Heart left ventricle (tissue), 16 donors: ENCODE measurements at regions of chr11 and their contacts with region 1.

Region 1: DNA sequence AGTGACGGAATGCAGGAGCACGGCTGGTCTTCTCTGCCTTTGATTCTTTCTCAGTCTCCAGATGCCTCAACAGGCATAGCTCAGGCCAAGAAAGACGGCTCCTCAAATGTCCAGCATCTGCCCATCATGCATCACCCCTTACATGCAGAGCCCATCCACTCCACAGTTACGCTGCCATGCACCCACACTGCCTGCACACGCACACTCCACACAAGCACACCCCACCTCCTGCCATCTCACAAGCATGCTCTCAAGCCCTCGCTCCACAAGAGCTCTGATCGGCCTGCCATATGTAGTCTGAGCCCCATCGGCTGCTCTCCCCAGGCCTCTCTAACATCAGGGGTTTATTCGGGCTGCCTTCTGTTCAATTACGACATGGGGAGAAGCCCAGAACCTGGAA is 18.8 kb downstream of the SCN4B start:
- DNase-seq: no peak
- ATAC-seq: no peak
- H3K4me3 ChIP-seq: no peak overlapping the region
- H3K27ac ChIP-seq: no peak overlapping the region
- H3K4me1 ChIP-seq: peaks cover 0 to 21% (median 0%) of the 10 kb centered on the region in 12 donors
- H3K27me3 ChIP-seq: no peaks in the 10 kb centered on the region
- CTCF ChIP-seq: no peak
- POLR2A ChIP-seq: no peak

Region 2: DNA sequence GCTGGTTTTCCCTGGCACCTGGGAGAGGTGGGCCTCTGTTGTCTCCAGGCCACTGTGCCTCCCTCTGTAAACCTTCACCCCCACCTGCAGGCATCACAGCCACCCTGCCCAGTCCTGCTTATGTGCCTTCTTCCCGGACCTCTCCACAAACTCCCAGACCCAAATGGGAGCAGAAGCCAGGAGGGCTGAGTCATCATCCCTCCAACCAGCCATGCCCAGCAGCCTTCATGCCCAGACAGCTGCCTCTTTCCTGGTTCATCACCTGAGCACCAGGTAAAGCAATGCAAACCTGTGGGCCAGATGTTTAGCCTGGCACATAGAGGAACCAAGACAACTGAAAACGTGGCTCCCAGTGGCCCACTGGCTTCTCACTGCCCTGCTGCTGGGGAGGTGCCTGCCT is 59.0 kb before region 1 on chr11:
- intact Hi-C with region 1: loop called in 1 of 10 experiments (anchors 2 kb)
- DNase-seq: no peak
- ATAC-seq: no peak
- H3K4me3 ChIP-seq: no peak overlapping the region
- H3K27ac ChIP-seq: no peak overlapping the region
- H3K4me1 ChIP-seq: no peaks in the 10 kb centered on the region
- H3K27me3 ChIP-seq: no peaks in the 10 kb centered on the region
- CTCF ChIP-seq: no peak
- POLR2A ChIP-seq: no peak

Region 3: DNA sequence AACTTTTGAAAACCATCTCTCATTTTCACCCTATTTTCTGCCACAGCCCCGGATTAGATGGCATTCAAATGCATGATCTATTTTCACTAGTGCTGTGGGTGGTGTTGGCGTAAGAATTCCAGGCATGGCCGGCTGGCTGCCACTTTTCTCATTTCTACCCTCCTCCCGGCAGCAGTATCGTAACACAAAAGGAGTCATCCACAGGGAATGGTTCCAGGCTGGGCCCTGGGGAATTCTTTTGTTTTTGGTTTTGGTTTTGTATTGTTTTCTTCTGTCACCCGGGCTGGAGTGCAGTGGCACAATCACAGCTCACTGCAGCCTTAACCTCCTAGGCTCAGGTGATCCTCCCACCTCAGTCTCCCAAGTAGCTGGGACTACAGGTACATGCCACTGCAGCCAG is 77.2 kb after region 1 on chr11:
- intact Hi-C with region 1: no loop called
- DNase-seq: peak in 3 of 5 donors; percentile 30 to 49 (median 42)
- ATAC-seq: peak; percentile 45 to 83 (median 64)
- H3K4me3 ChIP-seq: no peak overlapping the region
- H3K27ac ChIP-seq: peak overlapping the region in 10 of 12 donors; percentile 4 to 85 (median 44)
- H3K4me1 ChIP-seq: peaks cover 0 to 89% (median 15%) of the 10 kb centered on the region in 12 donors
- H3K27me3 ChIP-seq: peaks cover 0 to 3% (median 0%) of the 10 kb centered on the region in 9 donors
- CTCF ChIP-seq: no peak
- POLR2A ChIP-seq: no peak

Region 4: DNA sequence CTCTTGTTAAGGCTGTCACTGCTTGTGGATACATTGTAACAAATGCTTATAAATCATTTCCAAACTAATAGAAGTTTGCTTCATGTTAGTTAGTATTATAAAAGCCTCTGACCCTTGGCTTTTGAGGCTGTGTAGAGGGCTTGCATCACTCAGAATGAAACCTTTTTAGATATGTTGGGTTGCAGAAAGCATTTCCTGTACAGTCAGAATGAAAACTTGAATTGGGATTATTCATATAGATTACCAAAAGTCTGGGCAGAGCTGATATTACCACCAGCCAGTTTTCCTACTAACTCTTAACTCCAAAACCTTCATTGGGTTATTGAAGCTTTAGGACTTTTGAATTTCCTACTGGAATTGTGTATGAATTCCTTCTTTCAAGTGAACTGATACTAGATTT is 314.5 kb after region 1 on chr11:
- intact Hi-C with region 1: no loop called
- DNase-seq: no peak
- ATAC-seq: no peak
- H3K4me3 ChIP-seq: no peak overlapping the region
- H3K27ac ChIP-seq: no peak overlapping the region
- H3K4me1 ChIP-seq: peaks cover 0 to 30% (median 11%) of the 10 kb centered on the region in 12 donors
- H3K27me3 ChIP-seq: no peaks in the 10 kb centered on the region
- CTCF ChIP-seq: no peak
- POLR2A ChIP-seq: no peak